Right ventricle myocardium inferior (tissue), 1 donor: ENCODE measurements at regions of chr11 and their contacts with region 1.

Region 1: GRCh38 chr11:506238-506994 is 626 bp downstream of the RNH1 start:
- DNase-seq: peak; percentile 97
- ATAC-seq: peak; percentile 89

Region 2: GRCh38 chr11:207208-207862 is 299.1 kb before region 1 on chr11 and contains the starts of genes BET1L and RIC8A:
- intact Hi-C with region 1: no loop called
- DNase-seq: peak; percentile 98
- ATAC-seq: peak; percentile 92
- total RNA-seq, gene BET1L: 19.4 TPM
- total RNA-seq, gene RIC8A: 52.3 TPM

Region 3: GRCh38 chr11:469684-470560 is 36.5 kb before region 1 on chr11:
- intact Hi-C with region 1: loop called (anchors 5 kb)
- DNase-seq: no peak
- ATAC-seq: peak; percentile 70

Region 4: GRCh38 chr11:548700-549603 is 42.5 kb after region 1 on chr11:
- intact Hi-C with region 1: no loop called
- DNase-seq: no peak
- ATAC-seq: no peak

Region 5: DNA sequence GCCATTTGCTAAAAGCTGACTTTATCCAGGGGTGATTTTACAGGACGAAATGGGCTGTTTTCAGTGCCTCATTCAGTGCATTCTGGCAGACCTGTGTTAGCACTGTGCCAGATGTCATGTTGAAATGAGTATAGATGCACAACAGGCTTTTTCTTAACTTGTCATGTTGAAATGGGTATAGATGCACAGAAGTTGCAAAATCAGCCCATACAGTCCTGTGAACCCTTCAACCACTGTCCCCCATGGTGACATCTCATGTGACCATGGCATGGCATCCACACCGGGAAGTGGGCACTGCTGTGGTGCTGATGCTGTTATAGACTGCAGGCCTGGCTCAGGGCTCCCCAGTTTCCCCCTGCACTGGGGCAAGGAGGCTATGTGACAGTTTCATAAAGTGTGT is 243.3 kb after region 1 on chr11:
- intact Hi-C with region 1: no loop called
- DNase-seq: no peak
- ATAC-seq: no peak